CD4-positive, alpha-beta memory T cell (primary cell): ENCODE measurements at regions of chr17 and their contacts with region 1.

Region 1: GRCh38 chr17:77331301-77331864 is 190.6 kb downstream of the SEC14L1 start:
- DNase-seq: peak; percentile 92 to 95 (median 94)
- H3K4me3 ChIP-seq: peak overlapping the region; percentile 48 to 57
- H3K4me3 Mint-ChIP-seq: peak overlapping the region; percentile 80 to 90 (median 85)
- H3K27ac ChIP-seq: peak overlapping the region; percentile 43
- H3K27ac Mint-ChIP-seq: peak overlapping the region; percentile 83 to 95 (median 93)
- H3K4me1 ChIP-seq: peaks cover 52% of the 10 kb centered on the region
- H3K4me1 Mint-ChIP-seq: peaks cover 30 to 66% (median 44%) of the 10 kb centered on the region in 4 donors
- H3K27me3 ChIP-seq: no peaks in the 10 kb centered on the region
- H3K27me3 Mint-ChIP-seq: no peaks in the 10 kb centered on the region

Region 2: GRCh38 chr17:76968707-76969597 is 362.4 kb before region 1 on chr17:
- CTCF ChIA-PET with region 1: no interaction called
- POLR2A ChIA-PET with region 1: no interaction called
- intact Hi-C with region 1: no loop called
- DNase-seq: peak; percentile 45 to 62 (median 49)
- H3K4me3 ChIP-seq: peak overlapping the region; percentile 52 to 63
- H3K4me3 Mint-ChIP-seq: peak overlapping the region; percentile 75 to 92 (median 86)
- H3K27ac ChIP-seq: no peak overlapping the region
- H3K27ac Mint-ChIP-seq: peak overlapping the region; percentile 55 to 93 (median 84)
- H3K4me1 ChIP-seq: peaks cover 11% of the 10 kb centered on the region
- H3K4me1 Mint-ChIP-seq: peaks cover 6 to 40% (median 18%) of the 10 kb centered on the region in 4 donors
- H3K27me3 ChIP-seq: no peaks in the 10 kb centered on the region
- H3K27me3 Mint-ChIP-seq: peaks cover 2 to 5% of the 10 kb centered on the region in 2 donors

Region 3: GRCh38 chr17:77254951-77255825 is 76.2 kb before region 1 on chr17:
- CTCF ChIA-PET with region 1: no interaction called
- POLR2A ChIA-PET with region 1: no interaction called
- intact Hi-C with region 1: no loop called
- DNase-seq: no peak
- H3K4me3 ChIP-seq: no peak overlapping the region
- H3K4me3 Mint-ChIP-seq: no peak overlapping the region
- H3K27ac ChIP-seq: no peak overlapping the region
- H3K27ac Mint-ChIP-seq: no peak overlapping the region
- H3K4me1 ChIP-seq: no peaks in the 10 kb centered on the region
- H3K4me1 Mint-ChIP-seq: no peaks in the 10 kb centered on the region
- H3K27me3 ChIP-seq: peaks cover 5% of the 10 kb centered on the region
- H3K27me3 Mint-ChIP-seq: peaks cover 5% of the 10 kb centered on the region in 2 donors

Region 4: GRCh38 chr17:77356690-77357201 is 25.4 kb after region 1 on chr17:
- CTCF ChIA-PET with region 1: interaction called, 13 read pairs
- POLR2A ChIA-PET with region 1: interaction called, 9 read pairs
- intact Hi-C with region 1: no loop called
- DNase-seq: no peak
- H3K4me3 ChIP-seq: no peak overlapping the region
- H3K4me3 Mint-ChIP-seq: peak overlapping the region in 2 of 8 donors; percentile 9 to 46
- H3K27ac ChIP-seq: no peak overlapping the region
- H3K27ac Mint-ChIP-seq: peak overlapping the region in 6 of 7 donors; percentile 18 to 92 (median 82)
- H3K4me1 ChIP-seq: peaks cover 1% of the 10 kb centered on the region
- H3K4me1 Mint-ChIP-seq: peaks cover 6 to 46% (median 17%) of the 10 kb centered on the region in 4 donors
- H3K27me3 ChIP-seq: no peaks in the 10 kb centered on the region
- H3K27me3 Mint-ChIP-seq: no peaks in the 10 kb centered on the region

Region 5: GRCh38 chr17:77391668-77392375 is 60.4 kb after region 1 on chr17:
- CTCF ChIA-PET with region 1: interaction called, 30 read pairs
- POLR2A ChIA-PET with region 1: interaction called, 92 read pairs
- intact Hi-C with region 1: no loop called
- DNase-seq: peak; percentile 39 to 75 (median 48)
- H3K4me3 ChIP-seq: peak overlapping the region in 1 of 2 donors; percentile 11
- H3K4me3 Mint-ChIP-seq: peak overlapping the region; percentile 57 to 84 (median 67)
- H3K27ac ChIP-seq: peak overlapping the region; percentile 50
- H3K27ac Mint-ChIP-seq: peak overlapping the region; percentile 86 to 95 (median 89)
- H3K4me1 ChIP-seq: peaks cover 95% of the 10 kb centered on the region
- H3K4me1 Mint-ChIP-seq: peaks cover 39 to 91% (median 78%) of the 10 kb centered on the region in 4 donors
- H3K27me3 ChIP-seq: no peaks in the 10 kb centered on the region
- H3K27me3 Mint-ChIP-seq: no peaks in the 10 kb centered on the region

Region 6: GRCh38 chr17:77429919-77430752 is 98.8 kb after region 1 on chr17:
- CTCF ChIA-PET with region 1: interaction called, 33 read pairs
- POLR2A ChIA-PET with region 1: interaction called, 65 read pairs
- intact Hi-C with region 1: loop called (anchors 1 kb)
- DNase-seq: peak; percentile 74 to 84 (median 77)
- H3K4me3 ChIP-seq: no peak overlapping the region
- H3K4me3 Mint-ChIP-seq: peak overlapping the region in 5 of 8 donors; percentile 29 to 68 (median 47)
- H3K27ac ChIP-seq: no peak overlapping the region
- H3K27ac Mint-ChIP-seq: peak overlapping the region; percentile 64 to 90 (median 80)
- H3K4me1 ChIP-seq: peaks cover 100% of the 10 kb centered on the region
- H3K4me1 Mint-ChIP-seq: peaks cover 55 to 96% (median 78%) of the 10 kb centered on the region in 4 donors
- H3K27me3 ChIP-seq: no peaks in the 10 kb centered on the region
- H3K27me3 Mint-ChIP-seq: no peaks in the 10 kb centered on the region

Region 7: GRCh38 chr17:77451245-77451893 is 120.0 kb after region 1 on chr17:
- CTCF ChIA-PET with region 1: interaction called, 13 read pairs
- POLR2A ChIA-PET with region 1: interaction called, 252 read pairs
- intact Hi-C with region 1: no loop called
- DNase-seq: peak; percentile 65 to 83 (median 73)
- H3K4me3 ChIP-seq: peak overlapping the region; percentile 94 to 96
- H3K4me3 Mint-ChIP-seq: peak overlapping the region; percentile 90 to 100 (median 96)
- H3K27ac ChIP-seq: peak overlapping the region; percentile 73
- H3K27ac Mint-ChIP-seq: peak overlapping the region; percentile 81 to 100 (median 98)
- H3K4me1 ChIP-seq: peaks cover 61% of the 10 kb centered on the region
- H3K4me1 Mint-ChIP-seq: peaks cover 25 to 91% (median 45%) of the 10 kb centered on the region in 4 donors
- H3K27me3 ChIP-seq: no peaks in the 10 kb centered on the region
- H3K27me3 Mint-ChIP-seq: no peaks in the 10 kb centered on the region

Region 8: DNA sequence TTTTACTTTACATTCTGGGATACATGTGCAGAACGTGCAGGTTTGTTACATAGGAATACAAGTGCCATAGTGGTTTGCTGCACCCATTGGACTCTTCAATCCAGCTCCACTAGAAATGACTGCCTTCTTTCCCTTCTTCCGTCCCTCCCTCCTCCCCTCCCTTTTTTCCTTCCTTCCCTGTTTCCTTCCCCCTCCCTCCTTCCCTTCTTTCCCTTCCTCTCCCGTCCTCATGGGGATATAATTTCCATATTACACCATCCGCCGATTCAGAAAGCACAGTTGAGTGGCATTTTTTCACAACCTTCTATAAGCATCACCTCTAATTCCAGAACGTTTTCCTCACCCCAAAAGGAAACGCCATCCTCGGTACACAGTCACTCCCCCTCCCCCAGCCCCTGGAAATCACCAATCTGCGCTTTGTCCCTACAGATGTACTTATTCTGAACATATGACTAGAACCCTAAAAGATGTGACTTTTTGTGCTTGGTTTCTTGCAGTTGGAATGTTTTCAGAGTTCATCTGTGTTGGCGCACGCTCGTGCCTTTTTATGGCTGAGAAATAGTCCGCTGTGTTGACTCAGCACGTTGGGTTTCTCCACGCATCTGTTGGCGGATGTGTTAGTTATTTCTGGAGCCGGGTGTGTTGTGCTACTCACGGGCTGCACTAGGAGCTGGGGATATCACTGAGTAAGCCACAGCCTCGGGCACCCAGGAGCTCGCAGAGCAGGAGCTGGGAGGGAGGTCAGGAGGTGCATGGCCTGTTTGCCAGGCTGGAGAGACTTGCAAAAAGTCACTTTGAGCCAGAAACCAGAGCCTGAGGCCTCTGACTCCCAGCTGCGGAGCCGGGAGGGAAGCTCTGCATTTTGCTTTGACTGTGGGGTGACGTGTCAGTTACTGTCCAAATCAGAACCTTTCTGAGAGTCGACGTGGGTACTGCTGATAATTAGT is 145.8 kb after region 1 on chr17:
- CTCF ChIA-PET with region 1: interaction called, 14 read pairs
- POLR2A ChIA-PET with region 1: interaction called, 10 read pairs
- intact Hi-C with region 1: no loop called
- DNase-seq: peak in 1 of 5 donors; percentile 43
- H3K4me3 ChIP-seq: no peak overlapping the region
- H3K4me3 Mint-ChIP-seq: peak overlapping the region in 6 of 8 donors; percentile 33 to 75 (median 55)
- H3K27ac ChIP-seq: peak overlapping the region; percentile 30
- H3K27ac Mint-ChIP-seq: peak overlapping the region; percentile 74 to 94 (median 87)
- H3K4me1 ChIP-seq: peaks cover 99% of the 10 kb centered on the region
- H3K4me1 Mint-ChIP-seq: peaks cover 57 to 83% (median 69%) of the 10 kb centered on the region in 4 donors
- H3K27me3 ChIP-seq: no peaks in the 10 kb centered on the region
- H3K27me3 Mint-ChIP-seq: no peaks in the 10 kb centered on the region